T-cell (primary cell): ENCODE measurements at regions of chr1 and their contacts with region 1.

Region 1: DNA sequence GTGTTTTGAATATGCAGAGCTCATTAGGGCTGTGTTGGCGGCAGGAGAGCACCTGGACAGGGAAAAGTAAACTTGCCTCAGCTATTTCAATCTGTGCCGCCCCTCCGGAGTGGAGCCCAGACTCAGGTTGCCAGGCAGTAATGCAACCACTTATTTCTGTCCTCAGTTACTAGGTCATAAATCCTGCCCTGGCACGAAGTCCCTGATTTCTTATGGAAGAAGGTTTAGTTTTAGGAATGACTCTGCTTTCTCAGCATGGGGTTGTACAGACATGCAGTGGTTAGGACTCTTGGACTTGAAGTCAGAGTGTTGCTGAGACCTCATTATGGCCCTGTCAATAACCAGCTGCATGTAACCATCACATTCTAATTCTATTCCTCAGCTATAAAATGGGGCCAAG is 98.3 kb upstream of the FGGY start:
- DNase-seq: no peak
- ATAC-seq: no peak
- H3K4me3 ChIP-seq: no peak overlapping the region
- H3K4me3 Mint-ChIP-seq: no peak overlapping the region
- H3K27ac ChIP-seq: no peak overlapping the region
- H3K27ac Mint-ChIP-seq: no peak overlapping the region
- H3K4me1 ChIP-seq: no peaks in the 10 kb centered on the region
- H3K4me1 Mint-ChIP-seq: no peaks in the 10 kb centered on the region
- H3K27me3 ChIP-seq: no peaks in the 10 kb centered on the region
- H3K27me3 Mint-ChIP-seq: peaks cover 4 to 8% of the 10 kb centered on the region in 2 donors

Region 2: GRCh38 chr1:59936358-59936821 is 737.8 kb after region 1 on chr1:
- CTCF ChIA-PET with region 1: interaction called in 1 of 2 experiments, 10 read pairs
- POLR2A ChIA-PET with region 1: no interaction called
- DNase-seq: no peak
- ATAC-seq: no peak
- H3K4me3 ChIP-seq: no peak overlapping the region
- H3K4me3 Mint-ChIP-seq: no peak overlapping the region
- H3K27ac ChIP-seq: no peak overlapping the region
- H3K27ac Mint-ChIP-seq: no peak overlapping the region
- H3K4me1 ChIP-seq: no peaks in the 10 kb centered on the region
- H3K4me1 Mint-ChIP-seq: no peaks in the 10 kb centered on the region
- H3K27me3 ChIP-seq: peaks cover 0 to 2% of the 10 kb centered on the region in 2 experiments
- H3K27me3 Mint-ChIP-seq: peaks cover 18 to 24% of the 10 kb centered on the region in 2 donors